ENCODE measurements at regions of chr1 and their contacts with region 1.

Region 1: DNA sequence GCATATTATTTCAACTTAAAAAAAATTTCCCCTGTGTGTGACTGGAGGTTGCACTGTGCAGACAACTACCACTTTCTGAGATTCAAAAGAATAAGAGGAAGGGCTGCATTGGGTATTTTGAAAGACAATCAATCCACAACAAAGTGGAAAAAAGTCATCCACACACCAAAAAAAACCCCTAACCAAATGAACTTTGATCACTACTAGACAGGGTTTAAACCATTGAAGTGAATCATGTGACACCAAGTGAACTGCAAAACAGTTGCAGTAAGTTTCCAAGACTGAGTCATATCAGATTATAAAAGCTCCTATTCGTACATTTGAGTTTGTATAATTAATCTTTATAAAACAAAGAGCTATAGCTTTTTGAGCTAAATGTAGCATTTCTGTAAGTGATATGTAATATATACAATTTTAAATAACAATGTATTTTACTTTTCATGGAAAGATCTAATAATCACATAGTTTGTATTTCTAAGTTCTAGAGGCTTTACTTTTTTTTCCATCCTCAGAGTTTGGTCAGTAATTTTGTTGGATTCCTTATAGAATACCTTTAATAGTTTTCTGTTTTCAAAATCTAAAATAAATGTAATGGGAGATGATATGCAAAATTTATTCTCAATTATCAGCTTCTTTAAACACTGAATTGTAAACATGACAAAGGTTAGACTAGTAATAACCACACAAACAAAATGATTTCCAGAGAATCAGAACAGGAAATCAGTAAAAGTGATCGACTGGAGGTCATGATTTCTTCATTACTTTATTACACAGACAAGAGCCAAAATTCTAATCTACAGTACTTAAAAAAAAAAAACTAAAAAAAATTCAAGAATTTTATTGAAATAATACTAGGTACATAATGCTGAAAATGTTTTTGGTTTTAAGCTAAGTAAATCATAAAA is 50.5 kb upstream of the GFI1 start:
- DNase-seq: peak; percentile 82
- ATAC-seq: peak; percentile 79
- H3K4me3 ChIP-seq: no peak overlapping the region
- H3K27ac ChIP-seq: peak overlapping the region; percentile 79
- H3K4me1 ChIP-seq: peaks cover 14% of the 10 kb centered on the region
- H3K27me3 ChIP-seq: no peaks in the 10 kb centered on the region
- CTCF ChIP-seq: no peak
- EP300 ChIP-seq: peak; percentile 74 to 95; a peak in 3 of 4 replicates
- POLR2A ChIP-seq: no peak
- RAD21 ChIP-seq: no peak

Region 2: DNA sequence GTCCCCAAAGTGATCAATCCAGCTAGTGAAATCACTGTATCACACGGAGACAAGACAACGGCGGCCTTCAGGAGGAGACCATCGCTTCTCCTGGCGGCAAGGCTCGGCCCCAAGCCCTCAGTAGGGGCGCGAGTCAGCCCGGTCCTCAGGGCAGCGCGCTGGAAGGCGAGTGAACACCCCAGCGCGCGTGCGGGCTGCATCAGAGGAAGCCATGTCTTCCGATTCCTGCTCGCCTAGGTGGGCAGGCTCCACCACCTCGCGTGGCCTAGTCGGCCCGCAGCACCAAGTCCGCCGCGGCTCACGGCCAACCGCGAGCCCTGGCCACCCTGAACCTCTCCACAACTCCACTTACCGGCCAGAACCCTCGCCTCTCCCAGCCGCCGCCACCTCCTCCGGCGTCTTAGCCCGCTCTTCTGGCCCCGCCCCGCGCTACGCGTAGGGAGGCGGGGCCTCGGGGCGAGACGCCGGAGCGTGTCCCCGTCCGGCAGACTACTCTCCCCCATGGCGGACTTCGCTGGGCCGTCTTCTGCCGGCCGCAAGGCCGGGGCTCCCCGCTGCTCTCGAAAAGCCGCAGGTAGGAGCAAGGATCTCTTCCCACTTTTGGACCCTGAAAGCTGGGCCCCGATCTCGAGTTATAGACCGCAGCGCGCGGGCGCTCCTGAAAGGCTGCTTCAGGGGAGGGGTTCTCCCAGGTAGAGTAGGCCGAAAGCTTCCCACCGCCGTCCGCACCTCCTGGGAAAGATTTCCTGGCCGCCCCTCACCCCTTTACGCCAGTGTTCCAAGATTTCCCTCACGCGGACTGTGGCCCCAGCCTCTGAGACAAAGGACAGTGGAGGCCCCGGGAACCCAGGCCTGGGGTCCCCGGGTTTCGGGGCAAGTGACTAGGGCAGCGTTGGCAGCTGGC is 238.4 kb before region 1 on chr1 and contains the starts of genes GLMN and RPAP2:
- CTCF ChIA-PET with region 1: interaction called, 3 read pairs
- POLR2A ChIA-PET with region 1: interaction called, 3 read pairs
- RAD21 ChIA-PET with region 1: no interaction called
- SMC1A ChIA-PET with region 1: interaction called, 4 read pairs
- in situ Hi-C with region 1: no loop called
- intact Hi-C with region 1: loop called (anchors 5 kb)
- DNase-seq: peak; percentile 45
- ATAC-seq: peak; percentile 97
- H3K4me3 ChIP-seq: peak within 1 kb of the TSS; percentile 99
- H3K27ac ChIP-seq: peak within 1 kb of the TSS; percentile 93
- H3K4me1 ChIP-seq: no peaks in the 10 kb centered on the region
- H3K27me3 ChIP-seq: no peaks in the 10 kb centered on the region
- CTCF ChIP-seq: 0 out of 6 replicates have a peak, but pooled peaks of 1 of the 3 experiments have one; percentile 13
- EP300 ChIP-seq: no peak
- POLR2A ChIP-seq: peak; percentile 99
- RAD21 ChIP-seq: no peak
- polyA plus RNA-seq, gene GLMN: 18.2 to 20.6 TPM
- polyA plus RNA-seq, gene RPAP2: 20.2 to 24.0 TPM

Region 3: DNA sequence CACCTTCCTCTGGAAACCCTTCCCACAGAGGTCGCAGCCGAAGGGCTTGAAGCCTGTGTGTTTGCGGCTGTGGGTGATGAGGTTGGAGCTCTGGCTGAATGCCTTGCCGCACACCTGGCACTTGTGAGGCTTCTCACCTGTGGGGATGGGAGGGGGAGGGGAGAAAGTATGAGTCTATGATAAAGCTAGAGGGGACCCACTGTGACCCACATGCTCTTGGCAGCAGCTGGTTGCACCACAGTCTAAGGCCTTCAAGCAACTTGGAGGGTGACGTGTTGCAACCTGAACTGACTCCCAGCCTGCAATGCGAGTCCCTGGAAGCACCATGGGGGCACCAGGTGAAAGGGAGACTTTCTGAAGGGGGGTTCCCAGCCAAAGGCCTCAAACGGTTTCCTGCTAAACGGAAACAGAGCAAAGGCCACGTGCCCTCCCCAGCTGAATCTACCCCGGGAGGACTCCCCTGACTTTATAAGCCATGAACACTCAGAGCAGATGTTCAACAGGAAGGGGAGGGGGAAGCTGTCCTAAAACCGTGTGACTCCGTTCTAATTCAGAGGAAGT is 61.1 kb before region 1 on chr1:
- CTCF ChIA-PET with region 1: interaction called, 60 read pairs
- POLR2A ChIA-PET with region 1: interaction called, 8 read pairs
- RAD21 ChIA-PET with region 1: interaction called, 16 read pairs
- SMC1A ChIA-PET with region 1: interaction called, 13 read pairs
- in situ Hi-C with region 1: no loop called
- intact Hi-C with region 1: no loop called
- DNase-seq: no peak
- ATAC-seq: peak; percentile 56
- H3K4me3 ChIP-seq: no peak overlapping the region
- H3K27ac ChIP-seq: no peak overlapping the region
- H3K4me1 ChIP-seq: peaks cover 34% of the 10 kb centered on the region
- H3K27me3 ChIP-seq: no peaks in the 10 kb centered on the region
- CTCF ChIP-seq: no peak
- EP300 ChIP-seq: no peak
- POLR2A ChIP-seq: 0 out of 2 replicates have a peak, but pooled peaks have one; percentile 44
- RAD21 ChIP-seq: no peak

Region 4: GRCh38 chr1:92494485-92495141 is 42.6 kb before region 1 on chr1:
- CTCF ChIA-PET with region 1: interaction called, 60 read pairs
- POLR2A ChIA-PET with region 1: interaction called, 77 read pairs
- RAD21 ChIA-PET with region 1: interaction called, 138 read pairs
- SMC1A ChIA-PET with region 1: interaction called, 100 read pairs
- in situ Hi-C with region 1: no loop called
- intact Hi-C with region 1: no loop called
- DNase-seq: no peak
- ATAC-seq: no peak
- H3K4me3 ChIP-seq: no peak overlapping the region
- H3K27ac ChIP-seq: no peak overlapping the region
- H3K4me1 ChIP-seq: no peaks in the 10 kb centered on the region
- H3K27me3 ChIP-seq: no peaks in the 10 kb centered on the region
- CTCF ChIP-seq: no peak
- EP300 ChIP-seq: no peak
- POLR2A ChIP-seq: no peak
- RAD21 ChIP-seq: no peak

Region 5: GRCh38 chr1:92511541-92511940 is 25.7 kb before region 1 on chr1:
- CTCF ChIA-PET with region 1: interaction called, 3 read pairs
- POLR2A ChIA-PET with region 1: no interaction called
- RAD21 ChIA-PET with region 1: interaction called, 6 read pairs
- SMC1A ChIA-PET with region 1: interaction called, 19 read pairs
- in situ Hi-C with region 1: no loop called
- intact Hi-C with region 1: no loop called
- DNase-seq: no peak
- ATAC-seq: peak; percentile 75
- H3K4me3 ChIP-seq: no peak overlapping the region
- H3K27ac ChIP-seq: no peak overlapping the region
- H3K4me1 ChIP-seq: no peaks in the 10 kb centered on the region
- H3K27me3 ChIP-seq: no peaks in the 10 kb centered on the region
- CTCF ChIP-seq: no peak
- EP300 ChIP-seq: no peak
- POLR2A ChIP-seq: no peak
- RAD21 ChIP-seq: no peak

Region 6: DNA sequence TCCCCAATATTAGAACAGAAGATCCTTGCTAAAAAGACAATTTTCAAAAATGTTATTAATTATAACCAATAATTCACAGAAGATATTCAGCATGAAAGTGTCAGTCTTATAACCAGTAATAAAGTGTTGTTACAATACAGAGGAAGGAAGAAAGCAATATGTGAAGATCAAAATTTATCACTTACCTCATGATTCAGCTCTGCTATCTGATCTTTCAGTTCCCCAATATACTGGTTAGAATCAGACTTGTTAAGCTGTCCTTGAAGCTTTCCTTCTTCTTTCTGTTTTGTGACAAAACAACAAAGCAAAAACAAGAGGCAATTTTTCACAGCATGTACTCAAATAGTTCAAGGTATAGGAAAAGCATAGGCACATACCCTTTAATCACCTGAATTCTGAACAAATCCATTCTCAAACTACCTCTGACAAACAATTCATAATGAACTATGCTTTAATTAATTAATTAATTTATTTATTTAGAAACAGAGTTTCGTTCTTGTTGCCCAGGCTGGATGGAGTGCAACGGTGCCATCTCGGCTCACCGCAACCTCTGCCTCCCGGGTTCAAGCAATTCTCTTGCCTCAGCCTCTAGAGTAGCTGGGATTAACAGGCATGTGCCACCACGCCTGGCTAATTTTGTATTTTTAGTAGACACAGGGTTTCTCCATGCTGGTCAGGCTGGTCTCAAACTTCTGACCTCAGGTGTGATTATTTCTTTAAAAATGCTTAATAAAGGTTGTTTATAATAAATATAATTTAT is 26.4 kb after region 1 on chr1:
- CTCF ChIA-PET with region 1: interaction called, 8 read pairs
- POLR2A ChIA-PET with region 1: interaction called, 23 read pairs
- RAD21 ChIA-PET with region 1: interaction called, 32 read pairs
- SMC1A ChIA-PET with region 1: interaction called, 32 read pairs
- in situ Hi-C with region 1: no loop called
- intact Hi-C with region 1: no loop called
- DNase-seq: peak; percentile 45
- ATAC-seq: peak; percentile 100
- H3K4me3 ChIP-seq: no peak overlapping the region
- H3K27ac ChIP-seq: peak overlapping the region; percentile 11; the same call in 1 of the 2 replicates
- H3K4me1 ChIP-seq: peaks cover 10% of the 10 kb centered on the region; the same call in 1 of the 2 replicates
- H3K27me3 ChIP-seq: no peaks in the 10 kb centered on the region
- CTCF ChIP-seq: no peak
- EP300 ChIP-seq: peak; percentile 69 to 94; a peak in 3 of 4 replicates
- POLR2A ChIP-seq: no peak
- RAD21 ChIP-seq: no peak

Region 7: DNA sequence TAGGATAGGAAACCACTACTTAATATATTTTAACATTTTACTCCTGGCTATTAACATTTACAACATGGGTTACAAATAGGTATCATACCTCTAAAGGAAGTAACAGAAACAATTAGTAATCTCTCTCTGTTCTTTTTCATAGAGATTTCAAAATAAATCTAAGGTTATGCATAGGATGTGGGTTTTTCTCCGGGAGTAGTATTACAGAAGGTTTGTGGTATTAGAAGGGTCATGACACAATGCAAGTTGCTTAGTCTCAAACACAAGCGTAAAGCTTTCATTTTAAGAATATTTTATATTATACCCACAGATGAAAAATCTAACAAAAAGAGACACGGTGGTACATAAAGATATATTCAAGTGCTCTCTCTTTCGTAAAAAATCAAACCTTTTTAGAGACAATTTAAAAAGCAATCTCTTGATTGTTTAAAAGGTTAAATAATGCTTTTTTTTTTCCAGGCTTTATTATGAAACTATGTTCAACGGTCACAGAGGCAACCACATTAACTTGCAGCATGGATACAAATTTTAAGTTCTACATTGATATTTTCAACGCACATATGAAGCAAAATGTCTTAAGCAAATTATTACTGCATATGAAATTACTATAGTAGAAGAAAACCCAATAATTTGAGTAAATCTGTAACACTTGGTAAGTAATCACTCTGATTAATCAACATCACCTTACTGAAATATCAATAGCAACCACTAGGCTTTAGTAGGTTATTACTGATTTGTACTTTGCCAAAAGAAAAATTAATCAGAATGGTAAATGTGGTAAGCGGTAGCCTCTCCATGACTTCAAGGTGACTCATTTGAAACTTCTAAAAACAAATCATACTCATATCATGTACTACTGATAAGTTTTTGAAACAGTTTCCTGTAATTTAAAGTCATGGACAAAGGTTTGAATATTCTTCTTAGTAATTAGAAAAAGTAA is 46.9 kb after region 1 on chr1:
- CTCF ChIA-PET with region 1: interaction called, 7 read pairs
- POLR2A ChIA-PET with region 1: interaction called, 11 read pairs
- RAD21 ChIA-PET with region 1: interaction called, 23 read pairs
- SMC1A ChIA-PET with region 1: interaction called, 28 read pairs
- in situ Hi-C with region 1: no loop called
- intact Hi-C with region 1: loop called (anchors 1 kb)
- DNase-seq: peak; percentile 47
- ATAC-seq: peak; percentile 87
- H3K4me3 ChIP-seq: no peak overlapping the region
- H3K27ac ChIP-seq: peak overlapping the region; percentile 73
- H3K4me1 ChIP-seq: peaks cover 8% of the 10 kb centered on the region
- H3K27me3 ChIP-seq: no peaks in the 10 kb centered on the region
- CTCF ChIP-seq: peak in 2 of 3 experiments; percentile 15 to 32; a peak in 1 of 6 replicates
- EP300 ChIP-seq: peak; percentile 77 to 92; a peak in 3 of 4 replicates
- POLR2A ChIP-seq: no peak
- RAD21 ChIP-seq: peak; percentile 23; the same call in 1 of the 2 replicates

Measured in GM12878 (cell line).